Caco-2 (cell line): ENCODE measurements at regions of chr6 and their contacts with region 1.

Region 1: GRCh38 chr6:122730775-122731386 is 48.6 kb upstream of the FABP7 start:
- DNase-seq: peak in 1 of 2 experiments; percentile 37
- H3K4me3 ChIP-seq: no peak overlapping the region
- H3K4me3 Mint-ChIP-seq: no peak overlapping the region
- H3K27ac Mint-ChIP-seq: no peak overlapping the region
- H3K4me1 ChIP-seq: peaks cover 9% of the 10 kb centered on the region; the same call in 1 of the 2 replicates
- H3K4me1 Mint-ChIP-seq: peaks cover 15% of the 10 kb centered on the region
- H3K27me3 ChIP-seq: no peaks in the 10 kb centered on the region
- H3K27me3 Mint-ChIP-seq: no peaks in the 10 kb centered on the region
- CTCF ChIP-seq: peak; percentile 59 to 62

Region 2: GRCh38 chr6:122491919-122492555 is 238.8 kb before region 1 on chr6:
- CTCF ChIA-PET with region 1: interaction called, 3 read pairs
- POLR2A ChIA-PET with region 1: no interaction called
- intact Hi-C with region 1: loop called (anchors 1 kb)
- DNase-seq: peak; percentile 63 to 76
- H3K4me3 ChIP-seq: no peak overlapping the region
- H3K4me3 Mint-ChIP-seq: no peak overlapping the region
- H3K27ac Mint-ChIP-seq: no peak overlapping the region
- H3K4me1 ChIP-seq: no peaks in the 10 kb centered on the region
- H3K4me1 Mint-ChIP-seq: peaks cover 6% of the 10 kb centered on the region
- H3K27me3 ChIP-seq: no peaks in the 10 kb centered on the region
- H3K27me3 Mint-ChIP-seq: peaks cover 2% of the 10 kb centered on the region
- CTCF ChIP-seq: peak; percentile 77 to 88

Region 3: DNA sequence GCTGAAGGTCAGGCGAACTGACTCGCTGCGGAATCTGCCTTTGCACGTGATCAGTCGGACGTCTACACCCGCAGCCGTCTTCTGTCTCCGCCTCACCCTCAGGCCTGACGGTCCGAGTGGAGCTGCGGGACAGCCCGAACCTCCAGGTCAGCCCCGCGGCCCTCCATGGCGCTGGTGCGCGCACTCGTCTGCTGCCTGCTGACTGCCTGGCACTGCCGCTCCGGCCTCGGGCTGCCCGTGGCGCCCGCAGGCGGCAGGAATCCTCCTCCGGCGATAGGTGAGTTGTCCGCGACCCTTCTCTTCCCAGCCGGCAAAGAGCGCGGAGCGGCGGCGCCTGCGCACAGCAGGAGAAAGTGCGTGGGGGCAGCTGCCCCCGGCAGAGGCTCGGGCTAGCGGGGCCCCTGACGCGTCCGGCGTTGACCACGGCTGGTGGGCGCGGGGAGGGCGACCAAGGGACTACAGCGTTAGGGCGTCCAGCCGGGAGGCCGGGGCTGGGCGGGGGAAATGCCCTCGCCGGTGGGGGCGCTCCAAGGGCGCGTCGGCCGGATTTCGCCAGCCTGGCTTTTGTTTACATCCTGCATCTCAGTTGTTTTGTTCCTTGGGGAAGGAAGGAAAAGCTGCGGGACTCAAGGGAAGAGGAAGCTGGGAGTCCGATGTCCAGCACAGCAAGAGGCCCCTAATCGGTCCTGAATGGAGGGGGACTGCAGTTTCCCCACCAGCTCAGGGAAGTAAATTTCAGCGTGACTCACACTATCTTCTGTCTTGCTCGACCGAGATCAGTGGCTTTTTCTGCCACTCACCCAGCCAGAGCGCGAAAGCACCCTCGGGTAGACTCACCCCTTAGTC is 58.5 kb after region 1 on chr6 and contains the start of gene SMPDL3A:
- CTCF ChIA-PET with region 1: no interaction called
- POLR2A ChIA-PET with region 1: no interaction called
- intact Hi-C with region 1: loop called (anchors 1 kb)
- DNase-seq: peak; percentile 78 to 84
- H3K4me3 ChIP-seq: peak within 1 kb of the TSS; percentile 73
- H3K4me3 Mint-ChIP-seq: peak within 1 kb of the TSS; percentile 96
- H3K27ac Mint-ChIP-seq: peak within 1 kb of the TSS; percentile 92
- H3K4me1 ChIP-seq: peaks cover 51% of the 10 kb centered on the region
- H3K4me1 Mint-ChIP-seq: peaks cover 30% of the 10 kb centered on the region
- H3K27me3 ChIP-seq: no peaks in the 10 kb centered on the region
- H3K27me3 Mint-ChIP-seq: no peaks in the 10 kb centered on the region
- CTCF ChIP-seq: peak; percentile 50 to 61
- total RNA-seq, gene SMPDL3A: 20.4 and 21.7 TPM in 2 replicates

Region 4: DNA sequence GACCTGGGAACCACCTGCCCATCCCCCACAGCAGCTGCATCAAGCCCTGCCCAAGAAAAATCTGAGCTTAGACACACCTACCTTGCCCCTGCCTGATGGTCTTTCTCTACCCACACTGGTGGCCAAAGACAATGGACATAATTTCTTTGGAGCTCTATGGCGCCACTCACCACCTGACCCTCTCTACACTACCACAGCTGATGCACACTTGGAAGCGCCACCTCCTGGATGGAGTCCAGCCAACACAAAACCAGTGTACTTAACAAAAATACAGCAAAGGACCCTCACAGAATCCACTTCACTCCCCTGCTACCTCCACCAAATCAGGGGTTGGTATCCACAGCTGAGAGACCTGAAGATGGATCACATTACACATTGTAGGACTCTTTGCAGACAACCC is 225.5 kb after region 1 on chr6:
- CTCF ChIA-PET with region 1: no interaction called
- POLR2A ChIA-PET with region 1: no interaction called
- intact Hi-C with region 1: loop called (anchors 5 kb)
- DNase-seq: no peak
- H3K4me3 ChIP-seq: no peak overlapping the region
- H3K4me3 Mint-ChIP-seq: no peak overlapping the region
- H3K27ac Mint-ChIP-seq: no peak overlapping the region
- H3K4me1 ChIP-seq: no peaks in the 10 kb centered on the region
- H3K4me1 Mint-ChIP-seq: no peaks in the 10 kb centered on the region
- H3K27me3 ChIP-seq: no peaks in the 10 kb centered on the region
- H3K27me3 Mint-ChIP-seq: no peaks in the 10 kb centered on the region
- CTCF ChIP-seq: no peak